Psoas muscle (tissue), 8 donors: ENCODE measurements at regions of chrX and their contacts with region 1.

Region 1: DNA sequence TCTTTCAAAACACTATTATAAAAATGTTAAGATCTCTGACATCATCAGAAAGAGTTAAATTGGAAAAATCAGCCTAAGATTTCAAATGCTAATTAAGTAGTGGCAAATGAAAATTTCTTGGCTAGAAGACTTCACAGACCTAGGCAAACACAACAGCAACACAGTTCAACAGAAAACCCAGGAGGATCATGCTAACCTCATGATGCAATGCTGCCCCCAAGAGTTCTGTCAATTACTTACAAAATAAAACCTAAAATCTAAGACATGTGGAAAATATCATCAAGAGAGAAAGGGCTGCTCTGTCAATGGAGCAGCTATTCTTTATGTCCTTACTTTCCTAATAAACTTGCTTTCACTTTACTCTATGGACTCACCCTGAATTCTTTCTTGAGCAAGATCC is 21.0 kb downstream of the S100G start:
- DNase-seq: no peak
- ATAC-seq: peak in 3 of 4 donors; percentile 43 to 77 (median 49)
- H3K4me3 ChIP-seq: no peak overlapping the region
- H3K27ac ChIP-seq: no peak overlapping the region
- H3K4me1 ChIP-seq: no peaks in the 10 kb centered on the region
- H3K27me3 ChIP-seq: peaks cover 0 to 2% (median 0%) of the 10 kb centered on the region in 3 donors
- CTCF ChIP-seq: peak; percentile 40

Region 2: GRCh38 chrX:16123222-16123786 is 547.7 kb before region 1 on chrX and contains the start of gene GRPR:
- intact Hi-C with region 1: loop called in 1 of 2 experiments (anchors 10 kb)
- DNase-seq: peak; percentile 61 to 72
- ATAC-seq: peak; percentile 73 to 87 (median 83)
- H3K4me3 ChIP-seq: no peak within 1 kb of the TSS
- H3K27ac ChIP-seq: no peak within 1 kb of the TSS
- H3K4me1 ChIP-seq: no peaks in the 10 kb centered on the region
- H3K27me3 ChIP-seq: peaks cover 0 to 4% (median 0%) of the 10 kb centered on the region in 3 donors
- CTCF ChIP-seq: peak; percentile 79
- total RNA-seq, gene GRPR: 0.32 to 0.60 (median 0.36) TPM

Region 3: GRCh38 chrX:16436348-16437188 is 234.4 kb before region 1 on chrX:
- intact Hi-C with region 1: loop called (anchors 2 to 10 kb)
- DNase-seq: peak; percentile 62 to 76
- ATAC-seq: peak; percentile 87 to 98 (median 96)
- H3K4me3 ChIP-seq: no peak overlapping the region
- H3K27ac ChIP-seq: no peak overlapping the region
- H3K4me1 ChIP-seq: no peaks in the 10 kb centered on the region
- H3K27me3 ChIP-seq: peaks cover 0 to 4% (median 0%) of the 10 kb centered on the region in 3 donors
- CTCF ChIP-seq: peak; percentile 61